ENCODE measurements at regions of chr12 and their contacts with region 1.

Region 1: GRCh38 chr12:76083904-76084862 is at the start of gene NAP1L1:
- DNase-seq: peak; percentile 94 to 98 (median 96)
- ATAC-seq: peak; percentile 85
- H3K4me3 ChIP-seq: peak within 1 kb of the TSS; percentile 72
- H3K4me3 Mint-ChIP-seq: peak within 1 kb of the TSS; percentile 100
- H3K27ac ChIP-seq: peak within 1 kb of the TSS; percentile 96 to 99
- H3K27ac Mint-ChIP-seq: peak within 1 kb of the TSS; percentile 98
- H3K4me1 ChIP-seq: peaks cover 28% of the 10 kb centered on the region
- H3K4me1 Mint-ChIP-seq: peaks cover 60% of the 10 kb centered on the region
- H3K27me3 ChIP-seq: no peaks in the 10 kb centered on the region
- H3K27me3 Mint-ChIP-seq: no peaks in the 10 kb centered on the region
- CTCF ChIP-seq: no peak
- total RNA-seq, gene NAP1L1: 646 to 654 TPM

Region 2: GRCh38 chr12:75505706-75506312 is 578.4 kb before region 1 on chr12:
- CTCF ChIA-PET with region 1: no interaction called
- POLR2A ChIA-PET with region 1: no interaction called
- intact Hi-C with region 1: loop called in 1 of 2 experiments (anchors 5 kb)
- DNase-seq: peak in 3 of 14 experiments; percentile 42 to 57 (median 56)
- ATAC-seq: peak; percentile 69
- H3K4me3 ChIP-seq: no peak overlapping the region
- H3K4me3 Mint-ChIP-seq: no peak overlapping the region
- H3K27ac ChIP-seq: no peak overlapping the region
- H3K27ac Mint-ChIP-seq: peak overlapping the region; percentile 31
- H3K4me1 ChIP-seq: peaks cover 5% of the 10 kb centered on the region
- H3K4me1 Mint-ChIP-seq: peaks cover 28% of the 10 kb centered on the region
- H3K27me3 ChIP-seq: no peaks in the 10 kb centered on the region
- H3K27me3 Mint-ChIP-seq: no peaks in the 10 kb centered on the region
- CTCF ChIP-seq: peak; percentile 72

Region 3: DNA sequence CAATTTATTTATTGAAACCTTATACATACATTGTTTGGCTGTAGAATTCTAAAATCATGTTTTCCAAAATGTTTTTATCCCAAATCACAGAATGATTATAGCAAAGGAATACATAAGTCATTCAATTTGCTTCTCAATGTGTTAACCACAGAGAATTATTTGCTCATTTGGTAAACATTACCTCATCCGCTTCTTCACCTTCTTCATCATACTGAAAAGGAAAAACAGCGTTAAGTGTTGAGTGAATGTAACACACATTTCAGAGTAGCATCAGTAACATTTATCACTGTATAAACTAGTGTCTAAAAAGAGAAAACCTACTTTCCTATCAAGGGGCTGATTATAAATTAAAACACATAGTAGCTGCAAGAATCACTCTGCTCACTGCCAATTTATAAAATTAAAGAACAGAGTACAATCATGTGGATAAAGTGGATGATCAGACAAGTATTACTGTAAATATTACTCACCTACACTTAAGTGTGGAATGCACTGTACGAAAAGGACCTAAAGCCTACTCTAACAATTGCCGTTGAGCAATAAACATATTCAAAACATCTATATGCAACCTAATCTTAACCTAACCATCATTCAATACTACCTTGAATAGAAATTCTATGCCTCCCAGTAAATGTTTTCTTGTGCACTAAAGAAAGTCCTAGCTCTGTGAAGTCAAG is 34.5 kb before region 1 on chr12:
- CTCF ChIA-PET with region 1: no interaction called
- POLR2A ChIA-PET with region 1: no interaction called
- intact Hi-C with region 1: loop called in 1 of 2 experiments (anchors 5 kb)
- DNase-seq: no peak
- ATAC-seq: no peak
- H3K4me3 ChIP-seq: no peak overlapping the region
- H3K4me3 Mint-ChIP-seq: no peak overlapping the region
- H3K27ac ChIP-seq: no peak overlapping the region
- H3K27ac Mint-ChIP-seq: no peak overlapping the region
- H3K4me1 ChIP-seq: no peaks in the 10 kb centered on the region
- H3K4me1 Mint-ChIP-seq: no peaks in the 10 kb centered on the region
- H3K27me3 ChIP-seq: no peaks in the 10 kb centered on the region
- H3K27me3 Mint-ChIP-seq: no peaks in the 10 kb centered on the region
- CTCF ChIP-seq: no peak

Region 4: GRCh38 chr12:76094754-76095153 is 10.6 kb after region 1 on chr12:
- CTCF ChIA-PET with region 1: no interaction called
- POLR2A ChIA-PET with region 1: no interaction called
- intact Hi-C with region 1: no loop called
- DNase-seq: no peak
- ATAC-seq: no peak
- H3K4me3 ChIP-seq: no peak overlapping the region
- H3K4me3 Mint-ChIP-seq: no peak overlapping the region
- H3K27ac ChIP-seq: no peak overlapping the region
- H3K27ac Mint-ChIP-seq: no peak overlapping the region
- H3K4me1 ChIP-seq: no peaks in the 10 kb centered on the region
- H3K4me1 Mint-ChIP-seq: no peaks in the 10 kb centered on the region
- H3K27me3 ChIP-seq: no peaks in the 10 kb centered on the region
- H3K27me3 Mint-ChIP-seq: peaks cover 7% of the 10 kb centered on the region
- CTCF ChIP-seq: no peak

Region 5: DNA sequence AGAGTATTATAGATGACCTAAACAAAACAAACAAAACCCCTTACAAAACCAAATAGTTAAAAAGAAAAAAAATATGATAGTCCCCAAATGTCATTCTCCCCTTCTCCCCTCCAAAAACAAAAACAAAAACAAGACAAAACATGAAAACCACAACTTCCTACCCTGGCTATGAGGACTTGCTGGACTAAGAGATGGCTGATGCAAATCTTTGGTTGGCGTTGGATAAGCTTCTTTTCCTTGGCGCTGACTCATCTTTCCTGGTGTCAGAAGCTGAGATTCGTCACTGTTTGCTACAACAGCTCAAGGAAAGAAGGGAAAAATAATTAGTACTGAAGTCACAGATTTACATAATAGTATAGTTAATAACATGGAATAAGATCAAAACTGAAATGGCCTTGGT is 366.5 kb after region 1 on chr12:
- CTCF ChIA-PET with region 1: no interaction called
- POLR2A ChIA-PET with region 1: no interaction called
- intact Hi-C with region 1: loop called (anchors 5 to 10 kb)
- DNase-seq: peak in 2 of 14 experiments; percentile 31 to 46
- ATAC-seq: no peak
- H3K4me3 ChIP-seq: no peak overlapping the region
- H3K4me3 Mint-ChIP-seq: no peak overlapping the region
- H3K27ac ChIP-seq: no peak overlapping the region
- H3K27ac Mint-ChIP-seq: no peak overlapping the region
- H3K4me1 ChIP-seq: no peaks in the 10 kb centered on the region
- H3K4me1 Mint-ChIP-seq: peaks cover 49% of the 10 kb centered on the region
- H3K27me3 ChIP-seq: no peaks in the 10 kb centered on the region
- H3K27me3 Mint-ChIP-seq: no peaks in the 10 kb centered on the region
- CTCF ChIP-seq: no peak

Region 6: DNA sequence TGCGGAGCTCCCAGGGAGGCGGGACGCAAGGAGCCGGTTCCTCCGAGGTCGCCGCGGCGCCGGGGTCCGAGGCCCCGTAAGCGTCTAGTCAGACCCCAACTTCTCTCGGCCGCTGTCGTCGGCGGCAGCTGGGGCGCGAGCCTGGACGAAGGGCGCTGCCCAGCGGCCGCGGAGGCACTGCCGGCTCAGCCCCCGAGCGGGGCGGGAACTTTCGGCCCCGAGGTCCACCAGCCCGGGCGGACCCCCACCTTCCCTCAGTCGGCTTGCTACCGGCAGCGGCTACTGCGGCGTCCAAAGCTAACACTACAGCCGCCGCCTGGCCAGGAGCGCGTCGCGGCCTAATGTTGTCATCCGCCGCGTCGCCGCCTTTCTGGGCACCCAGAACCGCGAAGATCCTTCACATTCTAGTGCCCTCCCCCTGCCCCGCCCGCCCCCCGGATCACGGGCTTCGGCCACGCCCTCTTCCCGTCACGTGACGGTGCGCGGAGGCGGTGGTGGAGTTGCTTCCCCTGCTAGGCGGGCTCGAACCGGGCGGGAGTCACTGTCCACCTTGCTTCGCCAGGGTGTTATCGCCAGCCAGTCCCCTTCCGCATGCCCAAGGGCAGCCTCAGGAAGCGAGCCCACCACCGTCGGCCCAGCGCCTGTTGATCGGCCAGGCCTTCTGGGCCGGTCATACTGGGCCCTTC is 475.4 kb after region 1 on chr12 and contains the start of gene OSBPL8:
- CTCF ChIA-PET with region 1: no interaction called
- POLR2A ChIA-PET with region 1: interaction called, 32 read pairs
- intact Hi-C with region 1: loop called (anchors 2 kb)
- DNase-seq: peak; percentile 90 to 98 (median 96)
- ATAC-seq: peak; percentile 58
- H3K4me3 ChIP-seq: peak within 1 kb of the TSS; percentile 88
- H3K4me3 Mint-ChIP-seq: peak within 1 kb of the TSS; percentile 94
- H3K27ac ChIP-seq: peak within 1 kb of the TSS; percentile 85 to 99
- H3K27ac Mint-ChIP-seq: peak within 1 kb of the TSS; percentile 95
- H3K4me1 ChIP-seq: peaks cover 16% of the 10 kb centered on the region
- H3K4me1 Mint-ChIP-seq: peaks cover 46% of the 10 kb centered on the region
- H3K27me3 ChIP-seq: no peaks in the 10 kb centered on the region
- H3K27me3 Mint-ChIP-seq: no peaks in the 10 kb centered on the region
- CTCF ChIP-seq: no peak
- total RNA-seq, gene OSBPL8: 154 to 160 TPM

Region 7: DNA sequence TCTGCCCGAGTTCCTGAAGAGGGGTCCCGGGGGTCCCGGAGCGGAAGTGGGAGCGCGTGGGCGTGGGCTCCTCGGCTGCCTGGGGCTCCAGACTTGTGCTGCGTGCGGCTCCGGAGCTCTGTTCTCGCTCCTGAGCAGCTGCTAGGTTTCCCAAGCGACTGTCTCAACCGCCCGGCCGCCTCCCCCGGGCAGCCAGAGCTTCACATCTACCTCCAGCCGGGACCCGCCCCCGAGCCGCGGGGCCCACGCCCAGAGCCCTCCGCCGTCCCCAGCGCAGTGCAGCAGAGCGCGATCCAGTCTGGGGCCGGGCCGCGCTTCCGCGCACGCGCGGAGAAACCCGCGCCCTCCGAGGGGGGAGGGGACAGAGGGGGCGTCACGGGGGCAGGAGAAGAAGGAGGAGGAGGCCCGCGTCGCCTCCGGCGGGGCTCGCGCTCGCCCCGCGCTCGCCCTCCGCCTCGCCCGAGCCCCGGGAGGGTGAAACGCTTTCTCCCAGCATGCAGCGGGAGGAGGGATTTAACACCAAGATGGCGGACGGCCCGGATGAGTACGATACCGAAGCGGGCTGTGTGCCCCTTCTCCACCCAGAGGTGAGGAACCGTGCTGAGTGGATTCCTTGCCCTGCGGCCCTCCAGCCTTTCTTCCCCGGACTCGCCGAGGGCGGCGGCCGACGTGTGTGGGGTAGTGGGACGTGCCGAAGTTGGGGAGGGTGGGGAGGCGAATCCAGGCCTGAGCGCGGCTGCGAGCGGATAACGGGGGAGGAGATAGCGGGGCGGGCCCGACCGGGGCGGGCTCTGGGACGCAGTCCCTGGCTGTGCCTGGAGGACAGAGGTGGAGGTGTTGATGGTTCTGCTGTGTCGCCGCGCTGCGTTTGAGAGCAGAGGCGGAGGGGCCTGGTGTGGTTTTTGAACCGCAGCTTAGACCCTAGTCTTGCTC is 679.8 kb after region 1 on chr12 and contains the start of gene ZDHHC17:
- CTCF ChIA-PET with region 1: no interaction called
- POLR2A ChIA-PET with region 1: no interaction called
- intact Hi-C with region 1: loop called in 1 of 2 experiments (anchors 2 kb)
- DNase-seq: peak; percentile 86 to 96 (median 92)
- ATAC-seq: peak; percentile 81
- H3K4me3 ChIP-seq: peak within 1 kb of the TSS; percentile 95
- H3K4me3 Mint-ChIP-seq: peak within 1 kb of the TSS; percentile 99
- H3K27ac ChIP-seq: peak within 1 kb of the TSS; percentile 85 to 95
- H3K27ac Mint-ChIP-seq: peak within 1 kb of the TSS; percentile 99
- H3K4me1 ChIP-seq: peaks cover 29% of the 10 kb centered on the region
- H3K4me1 Mint-ChIP-seq: peaks cover 60% of the 10 kb centered on the region
- H3K27me3 ChIP-seq: no peaks in the 10 kb centered on the region
- H3K27me3 Mint-ChIP-seq: no peaks in the 10 kb centered on the region
- CTCF ChIP-seq: no peak
- total RNA-seq, gene ZDHHC17: 36.4 to 42.6 TPM